Activated CD4-positive, alpha-beta T cell treated with anti-CD3 and anti-CD28 coated beads, Interleukin-2, amount 10 ng/mL, durations not matched to agents 7 days and 5 days (primary cell): ENCODE measurements at regions of chr17 and their contacts with region 1.

Region 1: DNA sequence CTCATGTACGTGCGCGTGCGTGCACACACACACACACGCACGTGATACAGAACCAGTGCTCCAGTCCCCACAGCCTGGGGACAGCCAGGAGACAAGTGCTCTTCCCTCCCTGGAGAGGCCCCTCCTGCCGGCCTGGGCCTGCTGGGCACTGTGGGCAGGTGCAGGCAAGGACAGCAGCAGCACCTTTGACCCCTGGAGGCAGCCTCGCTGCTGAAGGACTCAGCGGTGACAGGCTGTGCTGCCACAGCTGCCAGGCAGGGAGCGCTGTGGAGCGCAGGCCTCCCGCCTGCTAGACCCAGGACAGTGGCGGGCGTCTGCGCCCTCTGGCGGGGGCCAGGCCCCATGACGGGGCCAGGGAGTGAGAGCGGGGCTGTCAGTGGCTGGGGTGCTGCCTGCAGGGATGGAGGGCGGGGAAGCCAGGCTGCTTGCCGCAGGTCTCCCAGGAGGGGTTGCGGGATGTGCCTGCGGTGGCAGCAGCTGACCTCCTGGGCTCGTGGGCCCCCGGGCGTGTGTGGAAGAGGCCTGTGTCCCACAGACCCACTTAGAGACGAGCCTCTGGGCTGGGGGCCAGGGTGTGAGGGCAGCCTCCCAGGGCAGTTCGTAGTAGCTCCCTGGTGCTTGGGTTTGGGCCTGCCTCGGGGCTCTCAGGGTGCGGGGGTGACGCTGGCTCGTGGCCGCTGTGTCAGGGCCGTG is 63.5 kb upstream of the PVALEF start:
- DNase-seq: peak; percentile 89
- H3K4me3 Mint-ChIP-seq: no peak overlapping the region
- H3K27ac Mint-ChIP-seq: no peak overlapping the region
- H3K4me1 Mint-ChIP-seq: peaks cover under 1% of the 10 kb centered on the region
- H3K27me3 Mint-ChIP-seq: no peaks in the 10 kb centered on the region

Region 2: DNA sequence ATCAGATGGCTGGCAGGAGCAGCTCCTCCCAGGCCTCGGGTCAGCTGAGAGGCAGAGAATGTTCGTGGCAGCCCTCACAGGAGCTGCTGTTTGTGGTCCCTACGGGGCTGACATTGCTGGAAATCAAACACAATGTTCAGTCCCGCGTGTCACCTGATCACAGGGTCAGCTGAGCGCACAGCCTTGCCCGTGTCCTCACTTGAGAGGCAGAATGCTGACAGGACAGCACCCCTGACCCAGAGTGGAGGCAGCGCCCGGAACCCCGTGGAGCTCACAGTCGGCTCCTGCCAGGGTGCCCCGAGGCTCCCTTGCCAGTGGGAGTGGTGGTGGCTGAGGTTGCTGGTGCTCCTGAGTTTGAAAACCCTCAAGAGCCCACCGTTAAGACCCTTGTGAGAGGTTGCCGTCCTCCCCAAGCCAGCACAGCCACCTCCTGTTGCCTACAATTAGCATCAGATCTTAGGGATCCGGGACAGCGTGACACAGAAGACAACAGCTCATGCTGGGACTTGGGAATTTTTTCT is 113.8 kb before region 1 on chr17:
- CTCF ChIA-PET with region 1: interaction called, 20 read pairs
- POLR2A ChIA-PET with region 1: no interaction called
- DNase-seq: no peak
- H3K4me3 Mint-ChIP-seq: no peak overlapping the region
- H3K27ac Mint-ChIP-seq: no peak overlapping the region
- H3K4me1 Mint-ChIP-seq: peaks cover 16% of the 10 kb centered on the region
- H3K27me3 Mint-ChIP-seq: peaks cover 5% of the 10 kb centered on the region

Region 3: DNA sequence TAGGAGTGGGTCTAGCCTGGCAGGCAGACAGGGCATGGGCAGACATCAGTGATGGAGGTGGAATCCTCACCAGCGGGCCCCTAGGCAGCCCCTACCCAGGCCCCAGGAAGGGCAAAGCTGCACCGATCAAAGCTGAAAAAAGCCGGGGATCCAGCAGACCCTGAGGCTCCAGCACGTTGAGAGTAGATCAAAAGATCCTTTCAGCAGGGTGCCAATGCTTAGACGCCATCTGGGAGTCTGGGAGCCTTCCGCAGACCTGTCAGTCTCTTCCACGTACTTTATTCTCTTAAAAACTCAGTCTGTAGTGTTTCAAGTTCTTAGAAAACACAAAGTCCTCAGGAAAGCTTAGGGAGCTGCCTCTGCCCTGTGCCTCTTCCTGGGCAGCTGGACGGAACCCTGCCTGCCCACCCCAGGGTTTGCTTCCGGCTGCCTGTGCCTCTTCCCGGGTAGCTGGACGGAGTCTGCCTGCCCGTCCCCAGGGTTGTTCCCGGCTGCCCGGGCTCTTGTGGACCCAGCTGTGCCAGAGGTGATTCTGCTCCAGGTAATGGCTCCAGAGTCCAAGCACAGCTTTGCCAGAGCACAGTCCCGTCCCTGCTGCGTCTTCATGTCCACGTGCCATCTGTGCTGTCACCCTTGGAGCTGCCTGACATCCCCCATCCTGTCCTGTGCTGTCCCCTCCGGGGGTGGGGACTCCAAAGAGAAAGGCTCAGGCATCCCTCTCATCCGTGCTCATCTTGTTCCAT is 12.8 kb after region 1 on chr17:
- CTCF ChIA-PET with region 1: interaction called, 10 read pairs
- POLR2A ChIA-PET with region 1: no interaction called
- DNase-seq: no peak
- H3K4me3 Mint-ChIP-seq: no peak overlapping the region
- H3K27ac Mint-ChIP-seq: no peak overlapping the region
- H3K4me1 Mint-ChIP-seq: no peaks in the 10 kb centered on the region
- H3K27me3 Mint-ChIP-seq: no peaks in the 10 kb centered on the region